ENCODE measurements at regions of chr2 and their contacts with region 1.

Region 1: GRCh38 chr2:88055371-88056128 is at the start of gene KRCC1:
- DNase-seq: peak; percentile 97
- ATAC-seq: peak; percentile 99
- H3K4me3 ChIP-seq: peak within 1 kb of the TSS; percentile 85 to 96
- H3K27ac ChIP-seq: peak within 1 kb of the TSS; percentile 93 to 97
- H3K4me1 ChIP-seq: peaks cover 2 to 7% of the 10 kb centered on the region in 2 donors
- H3K27me3 ChIP-seq: no peaks in the 10 kb centered on the region
- total RNA-seq, gene KRCC1: 16.0 to 24.4 TPM

Region 2: GRCh38 chr2:88159955-88160415 is 104.4 kb after region 1 on chr2:
- intact Hi-C with region 1: loop called in 1 of 2 experiments (anchors 5 kb)
- DNase-seq: no peak
- ATAC-seq: peak; percentile 82
- H3K4me3 ChIP-seq: no peak overlapping the region
- H3K27ac ChIP-seq: no peak overlapping the region
- H3K4me1 ChIP-seq: no peaks in the 10 kb centered on the region
- H3K27me3 ChIP-seq: peaks cover 0 to 2% of the 10 kb centered on the region in 2 donors

Region 3: GRCh38 chr2:88187038-88187676 is 131.6 kb after region 1 on chr2:
- intact Hi-C with region 1: loop called in 1 of 2 experiments (anchors 2 kb)
- DNase-seq: no peak
- ATAC-seq: no peak
- H3K4me3 ChIP-seq: no peak overlapping the region
- H3K27ac ChIP-seq: no peak overlapping the region
- H3K4me1 ChIP-seq: no peaks in the 10 kb centered on the region
- H3K27me3 ChIP-seq: no peaks in the 10 kb centered on the region

Measured in aorta (tissue), 5 donors.